GM13976 (cell line): ENCODE measurements at regions of chr3 and their contacts with region 1.

Region 1: GRCh38 chr3:359672-360071 is 163.1 kb downstream of the CHL1 start:
- DNase-seq: no peak
- CTCF ChIP-seq: no peak

Region 2: DNA sequence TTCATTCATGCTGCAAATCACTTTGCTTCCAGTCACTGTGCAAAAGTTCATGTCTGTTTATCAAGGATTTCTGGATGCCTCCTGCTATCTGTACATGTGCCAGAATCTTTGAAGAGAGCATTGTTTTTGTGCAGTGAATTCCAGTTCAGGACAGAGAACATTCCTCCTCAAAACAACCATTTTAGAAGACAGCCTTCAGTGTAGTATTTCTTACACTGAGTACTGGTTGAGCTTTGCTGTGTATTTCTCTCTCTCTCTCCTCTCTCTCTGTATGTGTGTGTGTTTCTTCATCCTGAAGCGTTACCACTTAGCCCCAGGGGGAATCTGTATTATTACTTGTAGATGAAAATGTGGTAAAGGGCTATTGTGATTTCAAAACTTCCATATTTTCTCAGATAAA is 286.9 kb before region 1 on chr3:
- in situ Hi-C with region 1: no loop called
- DNase-seq: no peak
- CTCF ChIP-seq: no peak

Region 3: DNA sequence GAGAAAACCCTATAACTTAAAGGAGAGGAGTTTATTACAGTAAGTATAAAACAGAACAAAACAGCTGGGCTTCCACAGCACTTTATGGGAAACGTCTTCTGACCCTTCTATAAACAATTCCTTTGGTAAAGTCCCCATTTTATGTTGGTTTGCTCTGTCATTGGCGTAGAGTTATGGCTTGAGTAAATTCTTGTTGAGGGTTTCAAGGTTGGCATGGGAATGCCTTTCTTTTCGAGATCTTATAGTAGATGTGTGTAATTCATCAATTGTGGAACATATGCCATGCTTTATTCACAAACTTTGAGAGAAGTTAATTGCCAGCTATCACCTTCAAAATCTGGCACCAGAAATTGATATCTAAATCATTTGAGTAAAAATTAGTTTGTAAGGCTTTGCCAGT is 174.7 kb before region 1 on chr3:
- in situ Hi-C with region 1: no loop called
- DNase-seq: no peak
- CTCF ChIP-seq: no peak

Region 4: GRCh38 chr3:278300-279064 is 81.2 kb before region 1 on chr3:
- in situ Hi-C with region 1: loop called (anchors 10 kb)
- DNase-seq: peak; percentile 15
- CTCF ChIP-seq: no peak

Region 5: GRCh38 chr3:557972-558371 is 198.3 kb after region 1 on chr3:
- in situ Hi-C with region 1: no loop called
- DNase-seq: peak; percentile 21
- CTCF ChIP-seq: no peak